ENCODE measurements at regions of chr7 and their contacts with region 1.

Region 1: GRCh38 chr7:78039790-78040776 is 241.5 kb downstream of the PHTF2 start:
- DNase-seq: peak; percentile 25
- H3K27ac ChIP-seq: no peak overlapping the region
- CTCF ChIP-seq: peak; percentile 75

Region 2: GRCh38 chr7:78020136-78020873 is 19.8 kb before region 1 on chr7:
- CTCF ChIA-PET with region 1: interaction called, 11 read pairs
- POLR2A ChIA-PET with region 1: no interaction called
- DNase-seq: peak; percentile 72
- H3K27ac ChIP-seq: peak overlapping the region; percentile 65
- CTCF ChIP-seq: peak; percentile 91

Region 3: GRCh38 chr7:78062214-78062613 is 22.1 kb after region 1 on chr7:
- CTCF ChIA-PET with region 1: no interaction called
- POLR2A ChIA-PET with region 1: no interaction called
- DNase-seq: no peak
- H3K27ac ChIP-seq: no peak overlapping the region
- CTCF ChIP-seq: no peak

Region 4: GRCh38 chr7:78073609-78074382 is 33.7 kb after region 1 on chr7:
- CTCF ChIA-PET with region 1: no interaction called
- POLR2A ChIA-PET with region 1: no interaction called
- DNase-seq: no peak
- H3K27ac ChIP-seq: no peak overlapping the region
- CTCF ChIP-seq: no peak